ENCODE measurements at regions of chr5 and their contacts with region 1.

Region 1: DNA sequence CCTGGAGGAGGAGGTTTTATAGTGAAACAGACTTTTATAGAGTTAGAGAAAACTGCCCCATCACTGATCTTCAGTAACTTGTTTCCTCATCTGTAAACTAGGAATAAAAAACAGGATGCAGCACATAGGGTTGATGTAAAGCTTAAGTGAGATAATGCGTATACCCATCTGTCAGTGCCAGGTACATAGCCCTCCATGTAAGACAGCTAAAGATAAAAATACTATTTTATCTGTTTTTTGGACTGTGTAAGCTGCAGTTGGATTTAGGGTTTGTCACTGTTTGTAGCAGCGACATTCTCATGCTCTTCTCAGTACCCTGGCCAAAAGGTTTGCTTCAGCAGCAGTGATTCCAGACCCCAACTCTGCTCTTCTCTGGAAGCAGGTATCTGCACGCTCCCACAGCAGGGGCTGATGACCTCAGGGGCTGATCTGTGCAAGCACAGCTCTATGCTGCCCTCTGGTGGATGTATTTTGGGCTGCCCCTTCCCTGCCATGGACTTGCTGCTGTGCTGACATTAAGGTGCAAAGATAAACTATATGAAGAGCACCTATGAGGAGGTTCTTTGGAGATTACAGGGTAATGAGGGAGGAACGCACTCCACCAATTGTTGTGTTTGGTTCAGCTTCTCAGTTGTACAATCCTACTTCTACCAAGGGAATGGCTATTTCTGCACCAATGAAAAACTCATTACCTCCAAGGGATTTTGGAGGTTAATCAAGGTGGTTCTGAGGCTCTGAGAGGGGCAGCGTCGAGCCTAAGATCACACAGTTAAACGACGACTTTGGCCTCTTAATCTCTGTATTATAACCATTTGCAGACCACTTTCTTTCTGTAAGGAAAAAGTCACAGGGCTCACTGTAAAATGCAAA is 13.1 kb downstream of the HMHB1 start:
- H3K4me3 Mint-ChIP-seq: no peak overlapping the region
- H3K27ac Mint-ChIP-seq: no peak overlapping the region
- H3K4me1 Mint-ChIP-seq: no peaks in the 10 kb centered on the region
- H3K27me3 Mint-ChIP-seq: no peaks in the 10 kb centered on the region

Region 2: GRCh38 chr5:142922223-142922952 is 902.7 kb before region 1 on chr5:
- intact Hi-C with region 1: loop called (anchors 5 kb)
- H3K4me3 Mint-ChIP-seq: no peak overlapping the region
- H3K27ac Mint-ChIP-seq: no peak overlapping the region
- H3K4me1 Mint-ChIP-seq: peaks cover 37% of the 10 kb centered on the region
- H3K27me3 Mint-ChIP-seq: no peaks in the 10 kb centered on the region

Region 3: GRCh38 chr5:143016777-143017516 is 808.1 kb before region 1 on chr5:
- intact Hi-C with region 1: loop called (anchors 10 kb)
- H3K4me3 Mint-ChIP-seq: no peak overlapping the region
- H3K27ac Mint-ChIP-seq: no peak overlapping the region
- H3K4me1 Mint-ChIP-seq: peaks cover 23% of the 10 kb centered on the region
- H3K27me3 Mint-ChIP-seq: no peaks in the 10 kb centered on the region

Region 4: GRCh38 chr5:143311428-143311827 is 513.7 kb before region 1 on chr5:
- intact Hi-C with region 1: no loop called
- H3K4me3 Mint-ChIP-seq: no peak overlapping the region
- H3K27ac Mint-ChIP-seq: no peak overlapping the region
- H3K4me1 Mint-ChIP-seq: peaks cover 21% of the 10 kb centered on the region
- H3K27me3 Mint-ChIP-seq: no peaks in the 10 kb centered on the region

Region 5: DNA sequence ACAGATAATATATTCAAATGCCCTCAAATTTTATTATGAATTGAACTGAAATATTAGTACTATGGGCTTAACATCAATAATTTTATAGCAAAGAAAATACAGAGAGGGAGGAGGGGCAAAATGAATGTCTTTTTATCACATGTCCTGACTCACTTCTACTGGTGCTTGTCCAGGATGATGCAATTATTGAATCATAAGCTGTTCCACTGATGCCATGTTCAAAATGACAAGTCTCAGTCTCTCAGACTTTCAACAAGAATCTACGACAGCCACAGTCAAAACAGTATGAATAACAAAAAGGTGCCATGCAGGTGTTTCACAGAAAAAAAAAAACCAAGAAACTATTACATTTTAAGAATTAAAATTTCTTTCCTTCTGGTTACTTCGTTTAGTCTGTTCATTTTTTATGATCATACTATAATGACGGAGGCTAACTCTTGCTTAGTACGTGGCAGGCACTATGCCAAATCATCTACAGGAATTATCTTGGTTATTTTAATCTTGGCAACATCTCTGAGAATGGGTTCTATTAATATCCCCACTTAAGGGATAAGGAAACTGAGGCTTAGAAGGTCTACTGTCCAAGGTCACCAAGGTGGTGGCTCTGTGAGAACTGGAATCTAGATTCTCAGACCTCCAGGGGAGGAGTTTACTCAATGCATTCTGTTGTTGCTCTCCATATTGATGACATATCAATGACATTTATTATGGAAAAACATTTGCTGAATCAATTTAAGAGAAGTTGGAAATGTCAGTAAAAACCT is 483.1 kb before region 1 on chr5:
- intact Hi-C with region 1: loop called (anchors 10 kb)
- H3K4me3 Mint-ChIP-seq: no peak overlapping the region
- H3K27ac Mint-ChIP-seq: no peak overlapping the region
- H3K4me1 Mint-ChIP-seq: peaks cover 25% of the 10 kb centered on the region
- H3K27me3 Mint-ChIP-seq: no peaks in the 10 kb centered on the region

Region 6: DNA sequence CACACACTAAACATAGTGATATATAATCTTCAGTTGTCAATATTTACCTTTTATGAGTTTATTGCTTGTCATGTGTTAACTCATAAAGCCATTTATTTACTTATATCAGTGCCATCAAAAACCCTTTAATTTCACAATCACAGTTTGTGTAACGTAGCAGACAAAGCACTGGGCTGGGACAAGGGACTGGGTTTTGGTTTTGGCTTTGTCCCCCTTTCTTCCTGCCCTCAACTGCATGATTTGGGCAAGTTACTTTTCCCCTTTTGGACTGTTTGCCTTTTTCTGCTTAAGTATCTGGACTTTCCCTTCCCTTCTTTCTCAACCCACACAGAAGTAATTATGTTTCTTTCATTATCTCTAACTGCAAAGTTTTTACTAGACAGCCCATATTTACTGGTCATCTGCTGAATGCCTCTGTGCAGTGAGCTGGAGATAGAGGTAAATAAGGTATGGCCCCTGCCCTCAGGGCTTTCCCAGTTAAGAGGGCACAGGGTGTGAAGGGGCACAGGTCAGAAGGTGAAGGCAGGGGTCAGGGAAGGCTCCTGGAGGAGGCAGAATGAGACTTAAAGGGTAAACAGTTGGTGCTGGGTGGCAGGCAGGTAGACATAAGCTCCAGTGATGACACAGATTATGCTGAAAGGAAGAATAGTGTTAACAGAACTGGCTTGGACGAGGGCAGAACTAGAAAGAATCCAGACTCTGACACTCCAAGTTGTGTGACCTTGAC is 406.8 kb before region 1 on chr5:
- intact Hi-C with region 1: loop called (anchors 5 kb)
- H3K4me3 Mint-ChIP-seq: no peak overlapping the region
- H3K27ac Mint-ChIP-seq: peak overlapping the region; percentile 20
- H3K4me1 Mint-ChIP-seq: peaks cover 31% of the 10 kb centered on the region
- H3K27me3 Mint-ChIP-seq: peaks cover 8% of the 10 kb centered on the region

Region 7: DNA sequence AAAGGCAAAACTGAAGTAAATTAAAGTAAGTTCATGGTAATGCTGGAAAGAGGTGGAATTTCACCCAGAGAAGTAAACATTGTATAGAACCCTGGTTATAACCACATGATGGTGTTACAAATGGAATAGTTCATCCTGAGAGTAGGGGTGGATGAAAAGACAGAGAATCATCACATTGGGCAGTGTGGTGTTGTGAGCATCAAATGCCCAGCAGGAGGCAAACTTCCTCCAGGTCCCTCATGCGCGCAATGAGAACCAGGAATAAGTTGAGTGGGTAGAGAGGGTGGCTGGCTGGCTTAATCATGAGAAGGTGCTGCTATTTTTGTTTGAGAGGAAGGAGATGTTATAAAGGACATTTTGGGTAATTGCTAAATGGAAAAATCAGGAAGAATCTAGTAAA is 176.4 kb before region 1 on chr5:
- intact Hi-C with region 1: loop called (anchors 1 kb)
- H3K4me3 Mint-ChIP-seq: no peak overlapping the region
- H3K27ac Mint-ChIP-seq: no peak overlapping the region
- H3K4me1 Mint-ChIP-seq: peaks cover 5% of the 10 kb centered on the region
- H3K27me3 Mint-ChIP-seq: no peaks in the 10 kb centered on the region

Region 8: DNA sequence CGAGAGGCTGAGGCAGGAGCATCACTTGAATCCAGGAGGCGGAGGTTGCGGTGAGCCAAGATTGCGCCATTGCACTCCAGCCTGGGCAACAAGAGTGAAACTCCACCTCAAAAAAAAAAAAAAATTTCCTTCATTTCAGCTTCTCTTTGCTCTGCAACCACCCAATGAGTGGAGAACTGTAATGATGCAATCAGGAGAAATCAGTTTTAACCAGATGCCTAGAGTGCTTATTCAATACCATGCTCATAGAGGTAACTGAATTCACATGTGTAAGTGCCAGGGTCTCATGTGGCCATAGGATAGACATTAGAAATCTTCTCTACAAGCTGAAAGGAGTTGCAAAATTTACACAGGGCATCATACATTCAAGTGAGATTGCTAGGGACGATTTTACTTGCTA is 57.4 kb after region 1 on chr5:
- intact Hi-C with region 1: no loop called
- H3K4me3 Mint-ChIP-seq: no peak overlapping the region
- H3K27ac Mint-ChIP-seq: no peak overlapping the region
- H3K4me1 Mint-ChIP-seq: no peaks in the 10 kb centered on the region
- H3K27me3 Mint-ChIP-seq: no peaks in the 10 kb centered on the region

Region 9: GRCh38 chr5:143922718-143923117 is 97.6 kb after region 1 on chr5:
- intact Hi-C with region 1: no loop called
- H3K4me3 Mint-ChIP-seq: no peak overlapping the region
- H3K27ac Mint-ChIP-seq: no peak overlapping the region
- H3K4me1 Mint-ChIP-seq: no peaks in the 10 kb centered on the region
- H3K27me3 Mint-ChIP-seq: peaks cover 3% of the 10 kb centered on the region

Region 10: DNA sequence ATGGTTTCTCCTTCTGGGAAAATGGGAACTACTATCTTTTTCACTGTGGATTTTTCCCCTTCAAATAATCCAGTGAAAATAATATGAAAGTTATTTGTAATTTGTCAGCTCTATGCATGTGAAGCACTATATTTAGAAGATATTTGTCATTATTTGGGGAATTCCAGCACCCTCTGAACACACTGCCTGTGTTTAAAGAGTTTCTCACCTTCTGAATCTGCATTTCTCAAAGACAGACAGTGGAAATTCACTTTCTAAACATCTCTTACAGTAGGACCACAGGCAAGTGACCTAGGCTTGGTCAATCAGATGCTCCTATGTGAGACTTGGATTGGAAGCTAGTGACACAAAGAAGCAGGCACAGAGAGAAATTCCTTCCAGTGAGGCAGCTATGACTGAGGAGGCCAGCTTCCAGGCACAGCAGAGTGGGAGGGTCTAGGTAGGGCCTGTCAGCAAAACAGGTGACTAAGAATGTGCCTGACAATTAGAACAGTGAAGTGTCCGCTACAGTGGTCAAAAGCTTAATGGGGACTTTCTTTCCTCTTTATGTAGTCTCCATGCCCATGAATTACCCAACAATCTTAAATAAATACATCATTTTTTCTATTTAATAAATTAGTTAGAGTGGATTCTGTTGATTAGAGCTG is 154.1 kb after region 1 on chr5:
- intact Hi-C with region 1: no loop called
- H3K4me3 Mint-ChIP-seq: no peak overlapping the region
- H3K27ac Mint-ChIP-seq: no peak overlapping the region
- H3K4me1 Mint-ChIP-seq: no peaks in the 10 kb centered on the region
- H3K27me3 Mint-ChIP-seq: peaks cover 2% of the 10 kb centered on the region